ENCODE measurements at regions of chr9 and their contacts with region 1.

Region 1: GRCh38 chr9:134683714-134684374 is 42.2 kb downstream of the COL5A1 start:
- DNase-seq: peak in 1 of 2 donors; percentile 80
- H3K4me3 ChIP-seq: no peak overlapping the region
- H3K27ac ChIP-seq: peak overlapping the region; percentile 80 to 81
- H3K4me1 ChIP-seq: peaks cover 10 to 45% of the 10 kb centered on the region in 2 donors
- H3K27me3 ChIP-seq: no peaks in the 10 kb centered on the region
- CTCF ChIP-seq: no peak

Region 2: DNA sequence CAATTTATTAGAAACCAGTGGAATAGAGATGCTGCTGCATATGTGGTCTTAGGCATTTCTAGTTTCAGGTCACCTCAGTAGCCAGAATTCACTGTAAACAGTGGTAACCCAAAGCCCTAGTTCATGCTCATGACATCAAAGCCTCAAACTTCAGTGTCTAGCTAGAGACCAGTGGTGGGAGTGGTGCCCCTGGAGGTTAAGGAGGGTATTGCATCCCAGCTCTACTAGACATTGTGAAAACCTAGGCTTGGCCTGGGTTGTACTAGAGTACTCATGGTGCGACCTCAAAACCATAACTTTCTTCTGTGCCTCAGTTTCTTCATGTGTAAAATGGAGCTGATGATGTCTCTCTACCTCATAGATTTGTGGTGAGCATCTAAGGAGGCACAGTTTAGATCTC is 23.4 kb before region 1 on chr9:
- intact Hi-C with region 1: loop called (anchors 2 kb)
- DNase-seq: no peak
- H3K4me3 ChIP-seq: no peak overlapping the region
- H3K27ac ChIP-seq: peak overlapping the region; percentile 79 to 88
- H3K4me1 ChIP-seq: peaks cover 33 to 59% of the 10 kb centered on the region in 2 donors
- H3K27me3 ChIP-seq: no peaks in the 10 kb centered on the region
- CTCF ChIP-seq: peak in 2 of 3 experiments; percentile 22 to 40